A549 (cell line): ENCODE measurements at regions of chr9 and their contacts with region 1.

Region 1: GRCh38 chr9:133184962-133185361 is 21.2 kb upstream of the GBGT1 start:
- DNase-seq: peak; percentile 71 to 76
- ATAC-seq: peak; percentile 75 to 82
- H3K4me3 ChIP-seq: no peak overlapping the region
- H3K27ac ChIP-seq: no peak overlapping the region
- H3K4me1 ChIP-seq: 0 out of 3 replicates have a peak, but pooled peaks cover 3% of the 10 kb centered on the region
- CTCF ChIP-seq: peak; percentile 58
- EP300 ChIP-seq: no peak
- POLR2A ChIP-seq: no peak
- RAD21 ChIP-seq: peak; percentile 64 to 72

Region 2: GRCh38 chr9:133108794-133109641 is 75.9 kb before region 1 on chr9:
- CTCF ChIA-PET with region 1: interaction called, 10 read pairs
- POLR2A ChIA-PET with region 1: no interaction called
- DNase-seq: no peak
- ATAC-seq: no peak
- H3K4me3 ChIP-seq: no peak overlapping the region
- H3K27ac ChIP-seq: no peak overlapping the region
- H3K4me1 ChIP-seq: no peaks in the 10 kb centered on the region; the same call in 2 of the 3 replicates
- CTCF ChIP-seq: no peak
- EP300 ChIP-seq: no peak
- POLR2A ChIP-seq: no peak
- RAD21 ChIP-seq: no peak

Region 3: GRCh38 chr9:133160742-133161546 is 24.0 kb before region 1 on chr9:
- CTCF ChIA-PET with region 1: interaction called, 24 read pairs
- POLR2A ChIA-PET with region 1: no interaction called
- DNase-seq: peak; percentile 83 to 94
- ATAC-seq: peak; percentile 81 to 84
- H3K4me3 ChIP-seq: no peak overlapping the region
- H3K27ac ChIP-seq: no peak overlapping the region
- H3K4me1 ChIP-seq: peaks cover 21% of the 10 kb centered on the region
- CTCF ChIP-seq: peak; percentile 47
- EP300 ChIP-seq: no peak
- POLR2A ChIP-seq: no peak
- RAD21 ChIP-seq: peak in 1 of 2 experiments; percentile 33; a peak in 1 of 5 replicates

Region 4: GRCh38 chr9:133205996-133206931 is 21.3 kb after region 1 on chr9:
- CTCF ChIA-PET with region 1: interaction called, 25 read pairs
- POLR2A ChIA-PET with region 1: no interaction called
- DNase-seq: no peak
- ATAC-seq: no peak
- H3K4me3 ChIP-seq: no peak overlapping the region
- H3K27ac ChIP-seq: no peak overlapping the region
- H3K4me1 ChIP-seq: no peaks in the 10 kb centered on the region
- CTCF ChIP-seq: no peak
- EP300 ChIP-seq: no peak
- POLR2A ChIP-seq: no peak
- RAD21 ChIP-seq: no peak

Region 5: DNA sequence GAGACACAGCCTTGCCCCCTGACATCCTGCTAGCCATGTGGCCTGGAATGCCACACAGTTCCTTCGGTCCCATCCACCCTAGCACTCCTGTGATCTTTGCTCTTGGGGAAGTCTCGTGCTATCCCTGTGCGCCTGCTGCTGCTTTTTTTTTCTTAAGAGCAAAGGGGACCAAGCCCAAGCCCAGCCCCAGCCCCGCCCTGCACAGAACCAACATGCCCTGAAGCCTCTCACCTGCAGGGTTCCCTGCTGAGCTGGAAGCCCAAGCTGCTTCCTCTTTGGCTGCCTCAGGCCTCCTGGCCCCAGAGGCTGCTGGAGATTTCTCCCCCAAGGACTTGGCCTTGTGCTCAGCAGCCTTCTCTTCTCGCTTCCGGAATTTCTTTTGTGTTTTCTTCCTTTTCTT is 149.2 kb after region 1 on chr9:
- CTCF ChIA-PET with region 1: interaction called, 82 read pairs
- POLR2A ChIA-PET with region 1: no interaction called
- DNase-seq: no peak
- ATAC-seq: no peak
- H3K4me3 ChIP-seq: no peak overlapping the region
- H3K27ac ChIP-seq: no peak overlapping the region
- H3K4me1 ChIP-seq: peaks cover 16% of the 10 kb centered on the region
- CTCF ChIP-seq: no peak
- EP300 ChIP-seq: no peak
- POLR2A ChIP-seq: no peak
- RAD21 ChIP-seq: no peak

Region 6: DNA sequence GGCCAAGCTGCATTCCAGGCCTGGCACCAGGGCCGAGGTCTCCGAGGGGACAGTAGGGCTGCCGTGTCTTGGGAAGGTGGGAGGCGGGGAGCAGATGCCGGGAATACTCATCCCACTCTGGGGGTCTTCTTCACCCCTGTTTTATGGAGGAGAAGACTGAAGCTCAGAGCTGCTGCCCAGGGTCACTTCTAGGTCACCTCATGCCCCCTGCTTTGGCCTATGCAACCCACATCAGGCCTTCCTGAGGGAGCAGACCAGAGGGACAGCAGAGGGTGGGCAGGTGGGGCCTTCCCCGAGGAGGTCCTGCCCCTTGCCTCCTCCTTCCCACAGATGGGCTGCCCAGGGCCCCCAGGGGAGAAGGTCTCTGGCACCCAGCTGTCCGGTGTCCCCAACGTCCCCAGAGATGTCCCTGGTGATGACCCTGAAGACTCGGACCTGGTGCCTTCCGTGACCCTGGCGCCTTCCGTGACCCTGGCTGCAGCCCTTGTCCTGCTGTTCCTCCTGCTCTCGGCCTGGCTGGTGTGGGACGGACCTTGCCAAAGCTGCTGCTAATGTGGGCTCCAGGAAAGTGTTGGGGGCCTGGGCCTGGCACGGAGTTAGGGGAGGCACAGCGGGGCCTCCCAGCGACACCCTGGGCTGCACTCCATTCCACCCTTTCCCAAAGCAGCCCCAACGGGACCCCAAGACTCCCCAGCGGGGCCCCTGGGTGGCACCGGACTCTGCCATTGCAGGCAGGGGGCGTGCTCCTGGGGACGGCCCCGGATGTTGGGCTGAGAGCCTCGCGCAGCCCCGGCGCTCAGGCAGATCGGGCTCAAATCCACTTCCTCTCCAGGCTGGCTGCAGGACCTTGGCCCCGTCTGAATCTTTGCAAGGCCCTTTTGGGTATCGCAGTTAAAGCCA is 300.6 kb after region 1 on chr9:
- CTCF ChIA-PET with region 1: interaction called, 76 read pairs
- POLR2A ChIA-PET with region 1: no interaction called
- DNase-seq: peak in 1 of 2 experiments; percentile 37
- ATAC-seq: peak; percentile 53 to 73; a peak in 4 of 6 replicates
- H3K4me3 ChIP-seq: no peak overlapping the region
- H3K27ac ChIP-seq: 0 out of 6 replicates have a peak overlapping the region, but pooled peaks of 1 of the 2 experiments have one; percentile 38
- H3K4me1 ChIP-seq: 0 out of 3 replicates have a peak, but pooled peaks cover 3% of the 10 kb centered on the region
- CTCF ChIP-seq: no peak
- EP300 ChIP-seq: no peak
- POLR2A ChIP-seq: no peak
- RAD21 ChIP-seq: no peak